Mammary epithelial cell (primary cell): ENCODE measurements at regions of chr17 and their contacts with region 1.

Region 1: DNA sequence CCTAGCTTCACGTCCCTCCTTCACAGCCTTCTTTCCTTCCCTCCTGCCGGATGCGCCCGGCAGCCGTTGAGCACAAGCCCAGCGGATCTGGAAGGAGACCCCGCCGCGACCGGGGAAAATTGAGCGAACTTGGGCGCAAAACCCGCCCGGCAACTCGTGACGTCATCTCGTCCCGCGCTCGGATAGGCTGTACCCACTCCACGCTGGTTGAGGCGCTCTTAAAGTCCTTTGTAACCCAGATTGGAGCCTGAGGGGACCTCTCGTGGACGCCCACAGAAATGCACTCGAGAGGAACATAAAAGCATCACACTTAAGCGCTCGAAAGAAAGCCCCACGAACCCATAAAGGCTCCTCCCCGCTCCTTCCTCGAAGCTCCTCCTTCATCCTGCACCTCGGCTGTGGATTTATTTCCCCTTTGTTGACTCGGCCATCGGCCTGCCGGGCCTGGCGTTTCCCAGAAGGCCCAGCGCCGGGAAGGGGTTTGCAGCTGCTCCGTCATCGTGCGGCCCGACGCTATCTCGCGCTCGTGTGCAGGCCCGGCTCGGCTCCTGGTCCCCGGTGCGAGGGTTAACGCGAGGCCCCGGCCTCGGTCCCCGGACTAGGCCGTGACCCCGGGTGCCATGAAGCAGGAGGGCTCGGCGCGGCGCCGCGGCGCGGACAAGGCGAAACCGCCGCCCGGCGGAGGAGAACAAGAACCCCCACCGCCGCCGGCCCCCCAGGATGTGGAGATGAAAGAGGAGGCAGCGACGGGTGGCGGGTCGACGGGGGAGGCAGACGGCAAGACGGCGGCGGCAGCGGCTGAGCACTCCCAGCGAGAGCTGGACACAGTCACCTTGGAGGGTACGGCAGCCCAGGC is at the start of gene PSMD3:
- DNase-seq: peak; percentile 99
- H3K4me3 ChIP-seq: peak within 1 kb of the TSS; percentile 73 to 97 (median 90)
- H3K27ac ChIP-seq: peak within 1 kb of the TSS; percentile 90
- H3K4me1 ChIP-seq: peaks cover 19% of the 10 kb centered on the region
- H3K27me3 ChIP-seq: no peaks in the 10 kb centered on the region
- CTCF ChIP-seq: peak; percentile 69 to 79
- total RNA-seq, gene PSMD3: 112 to 159 TPM

Region 2: DNA sequence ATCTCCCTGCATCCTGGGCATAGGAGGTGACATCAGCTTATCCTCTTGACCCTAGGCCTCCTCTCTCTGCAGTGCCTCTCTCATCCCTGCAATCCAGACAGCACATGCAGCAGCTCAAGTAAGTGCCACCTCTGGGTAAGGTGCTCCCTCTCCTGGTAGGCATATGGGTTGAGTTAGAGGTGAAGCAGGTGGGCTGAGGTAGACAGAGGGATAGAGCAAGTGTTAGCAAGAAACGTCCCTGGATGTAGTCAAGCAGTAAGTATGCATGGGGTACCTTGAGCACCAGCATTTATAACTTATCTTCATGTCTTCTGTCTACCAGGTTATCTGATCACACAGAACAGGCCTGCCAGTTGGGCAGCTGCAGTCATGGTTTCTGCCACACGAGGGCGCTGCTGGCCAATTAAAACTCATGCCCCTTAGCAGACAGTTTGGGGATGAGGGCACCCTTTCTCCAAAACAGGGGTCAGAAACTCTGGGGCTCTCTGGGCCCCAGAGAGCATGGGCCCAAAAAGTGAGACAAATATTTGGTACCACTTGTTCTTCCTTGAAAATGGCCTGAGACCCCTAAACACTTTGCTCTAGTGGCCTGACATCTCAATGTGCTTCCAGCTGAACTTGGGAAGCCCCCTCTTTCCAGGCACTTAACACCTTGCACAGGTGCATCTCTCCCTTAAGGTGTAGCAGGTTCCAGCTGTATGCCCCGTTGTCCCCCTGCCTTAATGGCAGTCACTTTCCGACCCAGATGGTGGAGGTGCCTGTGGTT is 432.7 kb before region 1 on chr17:
- CTCF ChIA-PET with region 1: interaction called, 3 read pairs
- dilution Hi-C with region 1: no loop called
- in situ Hi-C with region 1: no loop called
- intact Hi-C with region 1: loop called (anchors 10 kb)
- DNase-seq: peak; percentile 34
- H3K4me3 ChIP-seq: no peak overlapping the region
- H3K27ac ChIP-seq: no peak overlapping the region
- H3K4me1 ChIP-seq: no peaks in the 10 kb centered on the region
- H3K27me3 ChIP-seq: no peaks in the 10 kb centered on the region
- CTCF ChIP-seq: peak; percentile 89 to 96

Region 3: DNA sequence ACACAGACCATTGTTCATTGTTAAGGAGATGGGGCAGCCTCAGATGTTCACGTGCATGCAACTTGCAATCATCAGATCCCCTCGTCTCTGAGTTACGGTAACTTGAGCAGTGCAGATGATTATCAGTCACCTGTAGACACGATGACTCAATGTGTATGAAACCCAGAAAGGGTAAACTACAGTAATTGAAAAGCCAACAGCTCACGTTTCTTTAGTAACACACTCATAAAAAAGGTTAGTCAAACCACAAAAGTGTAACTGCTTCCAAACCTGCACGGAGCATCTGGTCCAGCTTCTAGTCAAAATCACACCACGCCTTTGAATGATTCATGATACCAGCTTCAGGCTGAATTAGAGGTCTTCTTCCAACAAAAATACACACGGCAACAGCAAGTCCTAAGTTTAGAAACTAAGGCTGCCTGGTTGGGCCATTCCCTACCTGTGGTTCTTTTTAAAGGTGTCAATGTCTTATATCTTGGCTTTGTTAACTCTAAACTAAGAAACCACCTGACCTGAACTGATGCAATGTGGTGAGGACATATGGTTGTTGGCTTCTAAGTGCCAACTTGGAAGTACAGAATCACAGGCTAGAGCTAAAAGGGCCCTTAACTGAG is 210.5 kb before region 1 on chr17:
- CTCF ChIA-PET with region 1: no interaction called
- dilution Hi-C with region 1: no loop called
- in situ Hi-C with region 1: no loop called
- intact Hi-C with region 1: loop called (anchors 2 kb)
- DNase-seq: peak; percentile 100
- H3K4me3 ChIP-seq: no peak overlapping the region
- H3K27ac ChIP-seq: no peak overlapping the region
- H3K4me1 ChIP-seq: peaks cover 17% of the 10 kb centered on the region
- H3K27me3 ChIP-seq: peaks cover 60% of the 10 kb centered on the region
- CTCF ChIP-seq: no peak

Region 4: DNA sequence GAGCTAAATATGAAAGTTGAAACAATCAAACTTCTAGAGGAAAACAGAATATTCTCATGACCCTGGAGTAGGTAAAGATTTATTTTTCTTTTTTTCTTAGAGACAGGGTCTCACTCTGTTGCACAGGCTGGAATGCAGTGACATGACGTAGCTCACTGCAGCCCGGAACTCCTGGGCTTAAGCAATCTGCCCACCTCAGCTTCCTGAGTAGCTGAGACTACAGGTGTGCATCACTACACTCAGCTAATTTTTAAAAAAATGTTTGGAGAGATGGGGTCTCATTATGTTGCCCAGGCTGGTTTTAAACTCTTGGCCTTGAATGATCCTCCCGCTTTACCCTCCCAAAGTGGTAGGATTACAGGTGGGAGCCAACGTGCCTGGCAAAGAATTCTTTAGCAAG is 132.0 kb before region 1 on chr17:
- CTCF ChIA-PET with region 1: no interaction called
- dilution Hi-C with region 1: no loop called
- in situ Hi-C with region 1: no loop called
- intact Hi-C with region 1: no loop called
- DNase-seq: no peak
- H3K4me3 ChIP-seq: no peak overlapping the region
- H3K27ac ChIP-seq: no peak overlapping the region
- H3K4me1 ChIP-seq: no peaks in the 10 kb centered on the region
- H3K27me3 ChIP-seq: peaks cover 17% of the 10 kb centered on the region
- CTCF ChIP-seq: no peak

Region 5: DNA sequence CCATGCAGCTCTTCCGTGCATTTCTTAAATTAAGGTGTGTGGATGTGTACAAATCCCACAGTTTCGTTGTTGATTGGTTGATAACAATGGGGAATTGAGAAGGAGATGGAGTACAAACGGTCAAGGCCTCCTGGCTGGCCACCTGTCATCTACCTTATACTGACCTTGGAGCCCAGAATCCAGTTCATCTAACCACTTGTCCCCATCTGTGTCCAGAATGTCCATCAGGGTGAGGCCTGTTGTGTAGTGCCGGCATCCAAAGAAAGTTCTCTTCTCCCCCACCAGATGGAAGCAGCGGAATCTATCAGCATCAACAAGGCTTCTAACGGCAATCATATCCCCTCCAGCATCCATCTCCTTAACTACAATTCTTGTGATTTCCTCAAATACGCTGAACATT is 63.7 kb before region 1 on chr17:
- CTCF ChIA-PET with region 1: interaction called, 7 read pairs
- dilution Hi-C with region 1: no loop called
- in situ Hi-C with region 1: no loop called
- intact Hi-C with region 1: loop called (anchors 1 kb)
- DNase-seq: no peak
- H3K4me3 ChIP-seq: no peak overlapping the region
- H3K27ac ChIP-seq: no peak overlapping the region
- H3K4me1 ChIP-seq: no peaks in the 10 kb centered on the region
- H3K27me3 ChIP-seq: no peaks in the 10 kb centered on the region
- CTCF ChIP-seq: peak; percentile 10 to 22

Region 6: DNA sequence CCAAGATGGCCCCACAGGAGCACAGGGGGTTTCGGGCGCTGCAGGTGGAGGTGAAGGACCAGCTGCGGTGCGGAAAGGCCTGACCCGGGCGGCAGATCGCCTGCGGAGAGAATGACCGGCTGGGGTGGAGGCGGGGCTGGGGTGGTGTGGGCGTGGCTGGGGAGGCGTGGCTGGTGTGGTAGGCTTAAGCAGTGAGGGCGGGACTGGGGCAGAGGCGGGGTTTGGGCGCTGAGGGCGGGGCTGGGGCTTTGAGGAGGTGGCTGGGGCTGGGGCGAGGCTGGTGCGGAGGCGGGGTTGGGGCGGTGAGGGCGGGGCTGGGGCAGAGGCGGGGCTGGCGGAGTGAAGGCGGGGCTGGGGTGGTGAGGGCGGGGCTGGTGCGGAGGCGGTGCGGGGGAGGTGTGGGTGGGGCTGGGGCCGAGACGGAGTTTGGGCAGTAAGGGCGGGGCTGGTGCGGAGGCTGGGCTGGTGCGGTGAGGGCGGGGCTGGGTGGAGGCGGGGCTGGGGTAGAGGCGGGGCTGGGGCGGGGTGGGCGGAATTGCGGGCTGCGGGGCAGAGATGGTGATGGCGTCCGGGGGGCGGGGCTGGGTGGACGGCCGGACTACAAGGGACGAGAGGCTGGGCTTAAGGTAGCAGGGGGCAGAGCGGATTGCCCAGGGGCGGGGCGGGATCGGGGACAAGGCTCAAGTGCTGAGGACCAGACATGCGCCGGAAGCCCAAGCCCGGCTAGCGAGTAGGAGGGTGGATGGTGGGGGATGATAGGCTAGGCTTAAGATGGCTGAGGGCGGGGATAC is 27.7 kb before region 1 on chr17:
- CTCF ChIA-PET with region 1: interaction called, 12 read pairs
- dilution Hi-C with region 1: no loop called
- in situ Hi-C with region 1: no loop called
- intact Hi-C with region 1: no loop called
- DNase-seq: peak; percentile 85
- H3K4me3 ChIP-seq: peak overlapping the region; percentile 8 to 55 (median 21)
- H3K27ac ChIP-seq: no peak overlapping the region
- H3K4me1 ChIP-seq: peaks cover 8% of the 10 kb centered on the region
- H3K27me3 ChIP-seq: no peaks in the 10 kb centered on the region
- CTCF ChIP-seq: no peak

Region 7: GRCh38 chr17:40021451-40021971 is 40.9 kb after region 1 on chr17:
- CTCF ChIA-PET with region 1: no interaction called
- dilution Hi-C with region 1: no loop called
- in situ Hi-C with region 1: no loop called
- intact Hi-C with region 1: loop called (anchors 1 kb)
- DNase-seq: peak; percentile 97
- H3K4me3 ChIP-seq: no peak overlapping the region
- H3K27ac ChIP-seq: peak overlapping the region; percentile 79
- H3K4me1 ChIP-seq: peaks cover 91% of the 10 kb centered on the region
- H3K27me3 ChIP-seq: no peaks in the 10 kb centered on the region
- CTCF ChIP-seq: peak in 1 of 2 donors; percentile 6

Region 8: GRCh38 chr17:40075201-40075941 is 94.8 kb after region 1 on chr17:
- CTCF ChIA-PET with region 1: interaction called, 28 read pairs
- dilution Hi-C with region 1: no loop called
- in situ Hi-C with region 1: no loop called
- intact Hi-C with region 1: no loop called
- DNase-seq: peak; percentile 30
- H3K4me3 ChIP-seq: no peak overlapping the region
- H3K27ac ChIP-seq: no peak overlapping the region
- H3K4me1 ChIP-seq: peaks cover 31% of the 10 kb centered on the region
- H3K27me3 ChIP-seq: no peaks in the 10 kb centered on the region
- CTCF ChIP-seq: peak; percentile 77 to 94